ENCODE measurements at regions of chr16 and their contacts with region 1.

Region 1: GRCh38 chr16:58733671-58734458 is at the start of gene GOT2:
- DNase-seq: peak; percentile 87
- ATAC-seq: peak; percentile 96
- H3K4me3 Mint-ChIP-seq: peak within 1 kb of the TSS; percentile 99
- H3K27ac Mint-ChIP-seq: peak within 1 kb of the TSS; percentile 94
- H3K4me1 Mint-ChIP-seq: peaks cover 37% of the 10 kb centered on the region
- H3K27me3 Mint-ChIP-seq: no peaks in the 10 kb centered on the region
- total RNA-seq, gene GOT2: 83.6 to 102 TPM

Region 2: DNA sequence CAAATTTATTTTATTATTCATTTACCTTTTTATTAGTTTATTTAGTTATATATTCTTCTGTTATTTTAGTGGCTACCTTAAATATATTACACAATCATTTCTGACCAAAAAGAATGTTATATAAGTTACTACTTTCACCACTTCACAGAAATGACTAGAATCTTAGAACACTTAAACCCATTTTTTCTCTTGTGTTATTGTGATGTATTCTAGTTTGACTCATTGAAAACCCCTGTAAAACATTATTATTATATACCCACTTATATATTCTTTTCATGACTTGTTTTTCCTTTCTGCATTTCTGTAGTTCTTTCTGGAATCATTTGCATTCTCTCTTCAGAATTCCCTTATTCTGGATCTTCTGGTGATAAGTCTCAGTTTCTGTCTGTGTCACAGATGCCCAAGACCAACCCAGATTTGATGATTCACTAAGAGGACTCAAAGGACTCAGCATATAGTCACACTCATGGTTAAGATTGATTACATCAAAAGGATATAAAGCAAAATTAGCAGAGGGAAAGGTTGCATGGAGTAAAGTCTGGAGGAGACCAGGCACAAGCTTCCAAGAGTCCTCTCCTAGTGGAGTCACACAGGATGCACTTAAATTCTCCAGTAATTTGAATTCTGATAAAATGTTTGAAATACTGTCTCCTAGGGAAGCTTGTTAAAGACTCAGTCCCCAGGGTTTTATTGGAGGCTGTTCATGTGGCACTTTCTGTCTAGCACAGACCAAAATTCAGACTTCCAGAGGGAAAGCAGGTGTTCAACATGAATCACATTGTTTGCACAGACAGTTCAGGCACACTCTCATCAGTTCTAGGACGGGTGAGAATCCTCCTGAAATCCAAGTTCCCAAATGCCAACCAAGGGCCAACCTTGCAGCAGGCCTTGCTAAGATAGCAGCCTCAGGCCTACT is 333.9 kb before region 1 on chr16:
- CTCF ChIA-PET with region 1: no interaction called
- DNase-seq: no peak
- ATAC-seq: no peak
- H3K4me3 Mint-ChIP-seq: no peak overlapping the region
- H3K27ac Mint-ChIP-seq: no peak overlapping the region
- H3K4me1 Mint-ChIP-seq: peaks cover 7% of the 10 kb centered on the region
- H3K27me3 Mint-ChIP-seq: no peaks in the 10 kb centered on the region

Region 3: DNA sequence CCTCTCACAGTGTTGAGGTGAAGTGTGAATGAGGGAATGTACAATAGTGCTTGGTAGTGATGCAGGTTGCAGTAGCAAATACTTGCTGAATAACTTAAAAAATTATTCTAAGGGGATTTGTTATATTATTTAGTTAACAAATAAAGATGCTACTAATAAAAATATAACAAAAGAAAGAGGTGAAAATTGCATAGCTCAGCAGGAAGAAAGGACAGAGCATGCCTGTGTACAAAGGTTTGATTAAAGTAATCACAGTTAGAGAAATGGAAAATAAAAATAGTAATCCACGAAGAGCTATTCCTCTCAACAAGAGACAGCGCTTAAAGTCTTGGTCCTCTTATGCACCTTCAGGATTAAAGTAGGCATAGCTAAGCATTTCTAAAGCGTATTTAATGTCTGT is 10.8 kb before region 1 on chr16:
- CTCF ChIA-PET with region 1: interaction called, 11 read pairs
- DNase-seq: no peak
- ATAC-seq: no peak
- H3K4me3 Mint-ChIP-seq: no peak overlapping the region
- H3K27ac Mint-ChIP-seq: no peak overlapping the region
- H3K4me1 Mint-ChIP-seq: no peaks in the 10 kb centered on the region
- H3K27me3 Mint-ChIP-seq: no peaks in the 10 kb centered on the region